ENCODE measurements at regions of chr9 and their contacts with region 1.

Region 1: DNA sequence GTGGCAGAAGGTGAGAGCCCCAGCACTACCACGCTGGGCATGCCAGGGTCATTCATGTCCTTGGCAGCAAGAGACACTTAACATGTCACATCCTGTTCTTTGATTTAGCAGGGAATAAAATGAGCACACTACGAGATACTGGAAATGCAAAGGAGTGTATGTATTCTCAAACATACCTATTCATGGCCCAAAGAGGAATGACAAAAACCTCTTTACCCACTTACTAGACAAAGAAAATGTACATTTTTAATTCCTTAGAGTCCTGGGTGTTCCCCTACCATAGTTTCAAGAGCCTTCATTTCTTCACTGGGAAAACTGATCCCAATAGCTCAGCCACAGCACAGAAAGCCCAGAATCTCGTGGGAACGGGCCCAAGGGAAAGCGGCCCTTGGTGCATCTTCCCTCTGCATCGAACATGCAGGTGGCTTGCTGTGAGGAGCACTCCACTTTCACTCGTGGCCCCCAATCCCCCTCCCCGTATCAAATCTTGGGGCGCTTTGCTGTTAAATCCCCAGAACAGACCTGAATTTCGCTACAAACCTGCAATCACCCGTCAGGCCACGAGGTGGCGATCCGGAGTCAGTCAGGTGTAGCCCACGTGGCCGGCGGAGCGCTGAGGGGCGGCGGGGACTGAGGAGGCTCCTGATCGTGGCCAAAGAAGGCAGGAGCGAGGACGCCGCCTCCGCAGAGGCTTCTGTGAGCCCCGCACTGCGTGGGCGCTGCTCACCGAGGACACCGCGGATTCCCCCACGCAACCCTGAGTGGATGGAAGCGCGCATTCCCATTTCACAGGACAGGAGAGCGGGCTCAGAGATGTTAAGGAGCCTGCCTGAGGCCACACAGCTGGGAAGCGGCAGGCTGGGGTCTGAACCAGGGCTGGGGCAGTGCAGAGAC is 91.4 kb downstream of the LMX1B start:
- DNase-seq: peak; percentile 90
- ATAC-seq: peak; percentile 86
- H3K4me3 ChIP-seq: peak overlapping the region in 4 of 5 experiments; percentile 17 to 26 (median 20)
- H3K4me3 Mint-ChIP-seq: peak overlapping the region; percentile 78
- H3K27ac ChIP-seq: no peak overlapping the region
- H3K27ac Mint-ChIP-seq: peak overlapping the region; percentile 65
- H3K4me1 ChIP-seq: peaks cover 13 to 16% of the 10 kb centered on the region in 2 donors
- H3K4me1 Mint-ChIP-seq: peaks cover 15% of the 10 kb centered on the region
- H3K27me3 ChIP-seq: peaks cover 0 to 29% (median 19%) of the 10 kb centered on the region in 4 experiments
- H3K27me3 Mint-ChIP-seq: peaks cover 37% of the 10 kb centered on the region
- CTCF ChIP-seq: peak; percentile 89

Region 2: DNA sequence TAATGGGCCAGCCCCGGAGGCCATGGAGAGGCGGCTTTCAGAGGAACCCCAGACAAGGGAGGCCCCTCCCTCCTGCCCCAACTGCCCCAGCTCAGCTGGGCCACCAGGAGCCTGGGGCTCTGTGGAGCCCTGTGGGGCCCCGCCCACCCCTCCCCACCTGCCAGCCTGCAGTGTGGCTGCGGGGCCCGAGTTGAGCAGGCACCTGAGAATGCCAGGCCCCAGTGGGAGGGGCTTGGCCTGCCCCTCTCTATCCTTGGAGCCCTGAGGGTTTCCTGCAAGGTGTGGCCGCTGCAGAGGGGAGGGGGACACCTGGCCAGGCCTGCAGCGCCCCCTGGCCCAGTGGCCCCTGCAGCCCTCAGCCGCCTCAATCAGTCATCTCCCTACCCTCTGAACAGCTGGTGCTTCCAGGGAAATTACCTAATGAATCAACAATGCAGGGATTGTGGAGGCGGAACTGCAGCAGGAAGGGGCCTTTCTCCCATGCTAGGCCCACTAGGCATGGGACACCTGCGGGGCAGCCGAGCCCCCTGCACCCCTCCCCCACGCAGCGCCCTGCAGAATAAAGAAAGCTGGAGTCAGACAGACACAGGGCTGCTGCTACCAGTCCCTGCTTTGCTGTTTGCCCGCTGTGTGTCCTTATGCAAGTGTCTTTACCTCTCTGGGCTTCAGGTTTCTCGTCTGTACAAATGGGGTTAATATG is 43.4 kb before region 1 on chr9:
- CTCF ChIA-PET with region 1: no interaction called
- POLR2A ChIA-PET with region 1: no interaction called
- intact Hi-C with region 1: no loop called
- DNase-seq: no peak
- ATAC-seq: no peak
- H3K4me3 ChIP-seq: no peak overlapping the region
- H3K4me3 Mint-ChIP-seq: no peak overlapping the region
- H3K27ac ChIP-seq: no peak overlapping the region
- H3K27ac Mint-ChIP-seq: no peak overlapping the region
- H3K4me1 ChIP-seq: peaks cover 10 to 13% of the 10 kb centered on the region in 2 donors
- H3K4me1 Mint-ChIP-seq: peaks cover 14% of the 10 kb centered on the region
- H3K27me3 ChIP-seq: peaks cover 0 to 52% (median 6%) of the 10 kb centered on the region in 4 experiments
- H3K27me3 Mint-ChIP-seq: peaks cover 35% of the 10 kb centered on the region
- CTCF ChIP-seq: no peak

Region 3: GRCh38 chr9:126722252-126723078 is 17.3 kb after region 1 on chr9:
- CTCF ChIA-PET with region 1: interaction called, 83 read pairs
- POLR2A ChIA-PET with region 1: interaction called, 6 read pairs
- intact Hi-C with region 1: loop called (anchors 1 kb)
- DNase-seq: peak; percentile 94
- ATAC-seq: peak; percentile 80
- H3K4me3 ChIP-seq: peak overlapping the region; percentile 41 to 95 (median 83)
- H3K4me3 Mint-ChIP-seq: peak overlapping the region; percentile 95
- H3K27ac ChIP-seq: peak overlapping the region; percentile 97 to 98
- H3K27ac Mint-ChIP-seq: peak overlapping the region; percentile 98
- H3K4me1 ChIP-seq: peaks cover 38 to 46% of the 10 kb centered on the region in 2 donors
- H3K4me1 Mint-ChIP-seq: peaks cover 47% of the 10 kb centered on the region
- H3K27me3 ChIP-seq: no peaks in the 10 kb centered on the region
- H3K27me3 Mint-ChIP-seq: no peaks in the 10 kb centered on the region
- CTCF ChIP-seq: no peak

Region 4: DNA sequence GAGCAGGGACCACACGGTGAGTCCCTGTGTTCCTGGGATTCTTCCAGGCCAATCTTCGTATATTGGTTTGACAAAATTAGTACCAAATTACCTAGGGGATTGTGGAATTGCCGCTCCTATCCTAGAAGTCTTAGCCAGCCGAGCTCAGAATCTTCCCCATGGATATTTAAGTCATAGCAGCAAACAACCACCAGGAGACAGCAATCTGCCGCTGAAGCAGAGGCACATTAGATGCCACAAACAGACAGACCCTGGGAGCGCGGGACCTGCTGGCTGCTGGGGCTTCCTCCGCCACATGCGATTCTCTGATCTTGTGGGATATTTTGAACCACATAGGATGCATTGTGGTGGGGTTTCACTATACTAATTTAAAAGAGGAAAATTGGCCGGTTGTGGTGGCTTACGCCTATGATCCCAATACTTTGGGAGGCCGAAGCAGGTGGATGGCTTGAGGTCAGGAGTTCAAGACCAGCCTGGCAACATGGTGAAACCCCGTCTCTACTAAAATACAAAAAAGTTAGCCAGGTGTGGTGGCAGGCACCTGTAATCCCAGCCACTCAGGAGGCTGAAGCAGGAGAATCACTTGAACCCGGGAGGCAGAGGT is 68.0 kb after region 1 on chr9:
- CTCF ChIA-PET with region 1: interaction called, 680 read pairs
- POLR2A ChIA-PET with region 1: no interaction called
- intact Hi-C with region 1: no loop called
- DNase-seq: no peak
- ATAC-seq: no peak
- H3K4me3 ChIP-seq: no peak overlapping the region
- H3K4me3 Mint-ChIP-seq: no peak overlapping the region
- H3K27ac ChIP-seq: no peak overlapping the region
- H3K27ac Mint-ChIP-seq: no peak overlapping the region
- H3K4me1 ChIP-seq: no peaks in the 10 kb centered on the region
- H3K4me1 Mint-ChIP-seq: no peaks in the 10 kb centered on the region
- H3K27me3 ChIP-seq: no peaks in the 10 kb centered on the region
- H3K27me3 Mint-ChIP-seq: peaks cover 13% of the 10 kb centered on the region
- CTCF ChIP-seq: peak; percentile 29

Region 5: GRCh38 chr9:126791406-126792151 is 86.5 kb after region 1 on chr9:
- CTCF ChIA-PET with region 1: interaction called, 680 read pairs
- POLR2A ChIA-PET with region 1: no interaction called
- intact Hi-C with region 1: no loop called
- DNase-seq: no peak
- ATAC-seq: no peak
- H3K4me3 ChIP-seq: no peak overlapping the region
- H3K4me3 Mint-ChIP-seq: no peak overlapping the region
- H3K27ac ChIP-seq: no peak overlapping the region
- H3K27ac Mint-ChIP-seq: no peak overlapping the region
- H3K4me1 ChIP-seq: no peaks in the 10 kb centered on the region
- H3K4me1 Mint-ChIP-seq: no peaks in the 10 kb centered on the region
- H3K27me3 ChIP-seq: peaks cover 0 to 13% (median 4%) of the 10 kb centered on the region in 4 experiments
- H3K27me3 Mint-ChIP-seq: peaks cover 58% of the 10 kb centered on the region
- CTCF ChIP-seq: no peak

Region 6: DNA sequence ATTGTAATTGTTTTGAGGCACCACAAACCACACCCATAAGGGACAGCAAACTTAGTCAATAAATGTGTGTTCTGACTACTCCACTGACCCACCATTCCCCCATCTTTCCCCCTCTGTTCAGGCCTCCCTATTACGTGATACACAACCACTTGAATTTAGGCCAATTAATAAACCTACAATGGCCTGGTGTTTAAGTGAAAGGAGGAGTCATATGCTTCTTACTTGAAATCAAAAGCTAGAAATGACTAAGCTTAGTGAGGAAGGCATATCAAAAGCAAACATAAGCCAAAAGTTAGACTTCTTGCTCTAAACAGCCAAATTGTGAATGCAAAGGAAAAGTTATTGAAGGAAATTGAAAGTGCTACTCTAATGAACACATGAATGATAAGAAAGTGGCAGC is 114.4 kb after region 1 on chr9:
- CTCF ChIA-PET with region 1: interaction called, 10 read pairs
- POLR2A ChIA-PET with region 1: no interaction called
- intact Hi-C with region 1: no loop called
- DNase-seq: no peak
- ATAC-seq: no peak
- H3K4me3 ChIP-seq: no peak overlapping the region
- H3K4me3 Mint-ChIP-seq: no peak overlapping the region
- H3K27ac ChIP-seq: no peak overlapping the region
- H3K27ac Mint-ChIP-seq: no peak overlapping the region
- H3K4me1 ChIP-seq: peaks cover 0 to 5% of the 10 kb centered on the region in 2 donors
- H3K4me1 Mint-ChIP-seq: peaks cover 12% of the 10 kb centered on the region
- H3K27me3 ChIP-seq: no peaks in the 10 kb centered on the region
- H3K27me3 Mint-ChIP-seq: no peaks in the 10 kb centered on the region
- CTCF ChIP-seq: no peak

Measured in B cell (primary cell).